ENCODE measurements at regions of chr20 and their contacts with region 1.

Region 1: GRCh38 chr20:5080384-5080877 is 39.3 kb downstream of the PCNA start:
- DNase-seq: no peak
- ATAC-seq: no peak
- H3K4me3 ChIP-seq: no peak overlapping the region
- H3K27ac ChIP-seq: no peak overlapping the region
- H3K4me1 ChIP-seq: peaks cover 25% of the 10 kb centered on the region
- H3K27me3 ChIP-seq: no peaks in the 10 kb centered on the region
- CTCF ChIP-seq: no peak
- EP300 ChIP-seq: no peak
- POLR2A ChIP-seq: no peak
- RAD21 ChIP-seq: no peak

Region 2: DNA sequence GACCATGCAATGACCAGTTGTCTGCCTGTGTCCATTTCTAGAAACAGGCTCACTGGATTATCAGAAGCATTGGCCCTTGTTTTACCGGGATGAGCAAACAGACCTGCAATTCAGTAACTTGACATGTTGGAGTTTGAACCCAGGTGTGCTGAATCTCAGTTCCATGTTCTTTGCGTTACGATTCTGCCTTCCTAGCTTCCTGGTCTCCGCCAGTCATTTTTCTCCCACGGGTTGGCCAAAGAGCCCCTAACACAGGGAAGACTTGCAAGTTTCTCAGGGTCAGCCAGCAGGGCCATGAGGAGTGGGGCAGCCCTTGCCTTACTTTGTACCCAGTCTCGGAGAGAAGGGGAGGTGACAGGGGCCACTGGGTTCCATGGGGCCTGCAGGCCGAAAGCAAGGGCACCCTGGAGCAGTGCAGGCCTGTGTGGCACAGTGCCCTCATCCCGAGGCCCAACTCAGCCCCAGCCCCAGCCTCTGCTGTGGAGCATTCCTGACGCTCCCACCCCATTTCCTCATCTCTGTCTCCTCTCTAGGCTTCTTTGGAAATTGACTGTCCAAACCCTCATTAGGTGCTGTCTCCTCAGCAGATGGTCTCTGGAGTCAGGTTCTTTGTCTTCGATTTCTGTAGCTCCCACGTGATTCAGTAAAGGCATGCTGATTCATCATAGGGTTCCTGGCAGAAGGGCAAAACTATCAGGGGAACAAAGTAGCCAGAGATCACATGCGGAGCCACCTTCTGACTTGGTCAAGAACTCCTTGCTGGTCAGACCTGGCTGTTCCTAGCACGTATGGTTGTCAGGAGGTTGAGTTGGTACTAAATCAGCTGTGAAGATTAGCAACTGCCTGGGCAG is 70.0 kb after region 1 on chr20:
- CTCF ChIA-PET with region 1: no interaction called
- POLR2A ChIA-PET with region 1: no interaction called
- in situ Hi-C with region 1: loop called (anchors 10 kb)
- intact Hi-C with region 1: no loop called
- DNase-seq: peak; percentile 96
- ATAC-seq: peak; percentile 75
- H3K4me3 ChIP-seq: peak overlapping the region; percentile 21 to 47 (median 21); a peak in 5 of 6 replicates
- H3K27ac ChIP-seq: peak overlapping the region; percentile 87
- H3K4me1 ChIP-seq: peaks cover 100% of the 10 kb centered on the region
- H3K27me3 ChIP-seq: no peaks in the 10 kb centered on the region
- CTCF ChIP-seq: no peak
- EP300 ChIP-seq: peak; percentile 46 to 71; a peak in 3 of 4 replicates
- POLR2A ChIP-seq: peak; percentile 57 to 77; a peak in 3 of 4 replicates
- RAD21 ChIP-seq: no peak; the same call in 1 of the 2 replicates

Region 3: GRCh38 chr20:5168651-5169396 is 88.4 kb after region 1 on chr20:
- CTCF ChIA-PET with region 1: no interaction called
- POLR2A ChIA-PET with region 1: no interaction called
- in situ Hi-C with region 1: no loop called
- intact Hi-C with region 1: no loop called
- DNase-seq: no peak
- ATAC-seq: no peak
- H3K4me3 ChIP-seq: no peak overlapping the region
- H3K27ac ChIP-seq: no peak overlapping the region
- H3K4me1 ChIP-seq: peaks cover 55% of the 10 kb centered on the region
- H3K27me3 ChIP-seq: no peaks in the 10 kb centered on the region
- CTCF ChIP-seq: no peak
- EP300 ChIP-seq: no peak
- POLR2A ChIP-seq: no peak
- RAD21 ChIP-seq: no peak